H1 (cell line): ENCODE measurements at regions of chr18 and their contacts with region 1.

Region 1: DNA sequence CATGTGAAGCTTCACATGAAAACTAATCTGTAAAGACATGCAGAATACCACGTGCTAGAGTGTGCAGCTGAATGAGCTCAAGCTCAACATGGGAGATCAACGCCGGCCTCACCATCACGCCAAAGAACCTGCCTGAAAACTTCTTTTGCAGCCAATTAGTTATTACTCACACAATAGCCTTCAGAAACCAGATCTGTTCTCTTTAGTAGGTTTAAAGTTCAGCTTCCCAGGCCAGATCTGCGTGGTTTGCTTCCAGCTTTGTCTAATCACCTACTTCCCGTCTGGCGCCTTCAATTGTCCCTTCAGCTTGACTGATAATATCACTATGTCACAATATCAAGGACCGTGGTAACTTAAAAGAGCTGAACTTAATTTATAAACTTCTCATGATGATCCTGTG is 68.0 kb upstream of the ZNF236 start:
- DNase-seq: no peak
- H3K4me3 ChIP-seq: no peak overlapping the region
- H3K27ac ChIP-seq: no peak overlapping the region
- H3K4me1 ChIP-seq: no peaks in the 10 kb centered on the region
- H3K27me3 ChIP-seq: no peaks in the 10 kb centered on the region
- CTCF ChIP-seq: no peak
- EP300 ChIP-seq: no peak
- POLR2A ChIP-seq: no peak
- RAD21 ChIP-seq: no peak

Region 2: GRCh38 chr18:76620321-76621170 is 133.8 kb before region 1 on chr18:
- CTCF ChIA-PET with region 1: no interaction called
- POLR2A ChIA-PET with region 1: no interaction called
- DNase-seq: no peak
- H3K4me3 ChIP-seq: peak overlapping the region; percentile 44 to 70 (median 62)
- H3K27ac ChIP-seq: no peak overlapping the region
- H3K4me1 ChIP-seq: peaks cover 6 to 19% (median 10%) of the 10 kb centered on the region in 4 experiments
- H3K27me3 ChIP-seq: peaks cover 0 to 16% (median 13%) of the 10 kb centered on the region in 4 experiments; a peak in 4 of 7 replicates
- CTCF ChIP-seq: peak; percentile 59 to 73 (median 66)
- EP300 ChIP-seq: no peak
- POLR2A ChIP-seq: no peak
- RAD21 ChIP-seq: peak; percentile 60 to 70

Region 3: DNA sequence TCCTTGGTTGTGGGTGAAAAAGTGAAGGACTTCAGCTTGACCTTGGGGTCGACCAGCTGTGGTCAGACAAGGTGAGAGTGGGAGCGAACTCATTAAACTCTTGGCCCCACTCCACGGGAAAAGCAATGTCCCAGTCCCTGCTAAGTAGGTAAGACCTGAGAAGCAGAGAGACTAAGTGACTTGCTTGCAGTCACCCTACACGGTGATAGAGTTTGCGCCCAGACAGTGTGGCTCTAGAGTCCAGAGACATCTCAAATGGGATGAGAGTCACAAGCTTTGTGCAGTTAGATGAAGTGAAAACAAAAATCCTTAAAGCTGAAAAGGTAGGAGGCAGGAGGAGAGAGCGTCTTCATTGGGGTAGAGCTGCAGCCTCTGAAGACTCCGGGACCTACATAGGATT is 12.1 kb after region 1 on chr18:
- CTCF ChIA-PET with region 1: interaction called, 11 read pairs
- POLR2A ChIA-PET with region 1: no interaction called
- DNase-seq: no peak
- H3K4me3 ChIP-seq: no peak overlapping the region
- H3K27ac ChIP-seq: no peak overlapping the region
- H3K4me1 ChIP-seq: peaks cover 0 to 2% (median 0%) of the 10 kb centered on the region in 4 experiments; a peak in 2 of 7 replicates
- H3K27me3 ChIP-seq: no peaks in the 10 kb centered on the region
- CTCF ChIP-seq: no peak
- EP300 ChIP-seq: no peak
- POLR2A ChIP-seq: no peak
- RAD21 ChIP-seq: no peak

Region 4: DNA sequence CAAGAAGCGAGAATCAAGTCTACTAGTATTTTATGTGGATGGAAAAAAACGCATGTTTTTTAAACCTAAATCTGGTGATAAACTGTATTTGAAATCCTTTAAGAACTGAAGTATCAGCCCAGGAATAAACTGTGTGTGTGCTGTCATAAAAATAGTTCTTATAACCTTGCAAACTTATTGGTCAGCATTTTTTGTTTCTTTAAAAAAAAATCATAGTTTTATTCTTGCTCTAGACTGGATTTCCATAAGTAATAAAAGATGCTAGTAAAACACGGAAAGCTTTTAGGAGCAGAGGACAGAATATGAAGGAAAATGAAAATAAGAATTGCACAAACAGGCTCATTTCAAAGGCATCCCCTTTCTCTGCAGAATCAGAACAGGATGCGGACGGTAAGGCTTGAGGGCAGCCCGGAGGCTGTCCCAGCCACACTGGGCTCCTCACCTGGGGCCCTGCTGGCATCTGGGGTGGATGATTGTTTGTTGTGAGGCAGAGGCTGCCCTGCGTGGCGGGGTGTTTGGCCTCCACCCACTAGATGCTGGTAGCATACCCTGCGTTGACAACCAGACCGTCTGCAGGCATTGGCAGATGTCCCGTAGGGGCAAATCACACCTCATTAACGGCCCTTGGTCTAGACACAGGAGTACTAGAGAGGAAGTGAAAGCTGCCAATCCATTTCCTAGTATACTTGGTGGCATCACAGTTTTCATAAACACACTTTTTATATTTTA is 325.8 kb after region 1 on chr18:
- CTCF ChIA-PET with region 1: no interaction called
- POLR2A ChIA-PET with region 1: no interaction called
- DNase-seq: no peak
- H3K4me3 ChIP-seq: no peak overlapping the region
- H3K27ac ChIP-seq: no peak overlapping the region
- H3K4me1 ChIP-seq: peaks cover 0 to 10% (median 0%) of the 10 kb centered on the region in 4 experiments; a peak in 1 of 7 replicates
- H3K27me3 ChIP-seq: no peaks in the 10 kb centered on the region
- CTCF ChIP-seq: no peak
- EP300 ChIP-seq: no peak
- POLR2A ChIP-seq: no peak
- RAD21 ChIP-seq: no peak